A549 (cell line): ENCODE measurements at regions of chr9 and their contacts with region 1.

Region 1: GRCh38 chr9:131739980-131740648 is at the start of gene RAPGEF1:
- DNase-seq: peak in 1 of 2 experiments; percentile 40
- ATAC-seq: peak; percentile 62 to 67
- H3K4me3 ChIP-seq: peak within 1 kb of the TSS; percentile 67
- H3K27ac ChIP-seq: peak within 1 kb of the TSS; percentile 80 to 99
- H3K4me1 ChIP-seq: peaks cover 31% of the 10 kb centered on the region
- CTCF ChIP-seq: peak; percentile 100
- EP300 ChIP-seq: no peak
- POLR2A ChIP-seq: no peak
- RAD21 ChIP-seq: peak; percentile 67 to 87
- polyA plus RNA-seq, gene RAPGEF1: 27.7 and 32.5 TPM in 2 replicates

Region 2: GRCh38 chr9:131585375-131585774 is 154.7 kb before region 1 on chr9:
- CTCF ChIA-PET with region 1: interaction called, 737 read pairs
- POLR2A ChIA-PET with region 1: no interaction called
- DNase-seq: no peak
- ATAC-seq: no peak
- H3K4me3 ChIP-seq: no peak overlapping the region
- H3K27ac ChIP-seq: no peak overlapping the region
- H3K4me1 ChIP-seq: no peaks in the 10 kb centered on the region
- CTCF ChIP-seq: no peak
- EP300 ChIP-seq: no peak
- POLR2A ChIP-seq: no peak
- RAD21 ChIP-seq: no peak

Region 3: GRCh38 chr9:131635285-131635684 is 104.8 kb before region 1 on chr9:
- CTCF ChIA-PET with region 1: interaction called, 68 read pairs
- POLR2A ChIA-PET with region 1: no interaction called
- DNase-seq: peak; percentile 89 to 90
- ATAC-seq: peak; percentile 99
- H3K4me3 ChIP-seq: no peak overlapping the region
- H3K27ac ChIP-seq: peak overlapping the region; percentile 63 to 78
- H3K4me1 ChIP-seq: peaks cover 18% of the 10 kb centered on the region
- CTCF ChIP-seq: no peak
- EP300 ChIP-seq: no peak
- POLR2A ChIP-seq: no peak
- RAD21 ChIP-seq: peak in 1 of 2 experiments; percentile 22; a peak in 1 of 5 replicates

Region 4: DNA sequence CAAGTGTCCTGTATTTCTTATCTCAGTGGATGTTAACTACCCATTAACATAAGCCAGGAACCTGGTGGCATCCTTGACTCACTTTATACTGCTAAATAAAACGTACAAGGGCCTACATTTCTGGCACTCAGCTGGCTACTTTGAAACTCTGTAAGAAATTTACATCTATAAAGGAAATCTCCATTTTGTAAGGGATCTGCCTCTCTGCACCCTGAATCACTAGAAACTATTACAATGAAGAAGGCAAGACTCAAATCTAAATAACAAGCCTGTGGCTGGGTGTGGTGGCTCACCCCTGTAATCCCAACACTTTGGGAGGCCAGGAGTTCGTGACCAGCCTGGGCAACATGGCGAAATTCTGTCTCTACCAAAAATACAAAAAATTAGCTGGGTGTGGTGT is 51.7 kb before region 1 on chr9:
- CTCF ChIA-PET with region 1: no interaction called
- POLR2A ChIA-PET with region 1: no interaction called
- DNase-seq: no peak
- ATAC-seq: no peak
- H3K4me3 ChIP-seq: no peak overlapping the region
- H3K27ac ChIP-seq: no peak overlapping the region
- H3K4me1 ChIP-seq: no peaks in the 10 kb centered on the region
- CTCF ChIP-seq: no peak
- EP300 ChIP-seq: no peak
- POLR2A ChIP-seq: no peak
- RAD21 ChIP-seq: no peak

Region 5: GRCh38 chr9:131709771-131710454 is 30.2 kb before region 1 on chr9:
- CTCF ChIA-PET with region 1: interaction called, 53 read pairs
- POLR2A ChIA-PET with region 1: no interaction called
- DNase-seq: no peak
- ATAC-seq: no peak
- H3K4me3 ChIP-seq: no peak overlapping the region
- H3K27ac ChIP-seq: peak overlapping the region in 1 of 2 experiments; percentile 84; a peak in 4 of 6 replicates
- H3K4me1 ChIP-seq: peaks cover 74% of the 10 kb centered on the region
- CTCF ChIP-seq: no peak
- EP300 ChIP-seq: no peak
- POLR2A ChIP-seq: no peak
- RAD21 ChIP-seq: no peak

Region 6: DNA sequence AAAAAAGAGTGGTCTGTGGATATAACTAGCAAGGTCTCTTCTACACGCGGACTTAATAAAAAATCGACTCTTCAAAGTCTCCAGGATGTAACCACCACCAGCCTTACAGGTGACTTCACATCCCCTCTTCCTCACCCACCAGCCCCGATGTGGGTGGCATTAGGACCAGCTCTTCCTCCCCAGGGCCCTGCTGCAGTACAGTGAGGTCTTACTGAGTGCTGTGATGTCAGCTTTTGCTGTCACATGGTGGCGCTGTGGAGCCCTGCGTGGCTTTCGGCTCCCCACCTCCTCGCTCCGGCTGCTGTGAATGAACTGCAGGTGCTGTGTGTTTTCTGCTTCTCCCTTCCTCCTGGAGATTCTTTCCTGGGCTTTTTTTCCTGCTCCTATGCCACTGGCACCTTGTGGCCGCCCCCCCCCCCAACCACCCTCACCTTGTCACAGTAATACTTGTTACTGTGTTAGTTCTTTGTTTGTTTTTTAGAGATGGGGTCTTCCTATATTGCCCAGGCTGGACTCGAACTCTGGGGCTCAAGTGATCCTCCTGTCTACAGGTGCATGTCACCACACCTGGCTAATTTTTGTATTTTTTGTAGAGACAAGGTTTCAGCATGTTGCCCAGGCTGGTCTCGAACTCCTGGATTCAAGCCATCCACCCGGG is 15.6 kb after region 1 on chr9:
- CTCF ChIA-PET with region 1: interaction called, 23 read pairs
- POLR2A ChIA-PET with region 1: no interaction called
- DNase-seq: peak; percentile 71 to 81
- ATAC-seq: peak; percentile 97 to 98
- H3K4me3 ChIP-seq: no peak overlapping the region
- H3K27ac ChIP-seq: no peak overlapping the region
- H3K4me1 ChIP-seq: peaks cover 6% of the 10 kb centered on the region; the same call in 1 of the 3 replicates
- CTCF ChIP-seq: peak; percentile 84
- EP300 ChIP-seq: no peak
- POLR2A ChIP-seq: no peak
- RAD21 ChIP-seq: peak; percentile 61 to 67

Region 7: DNA sequence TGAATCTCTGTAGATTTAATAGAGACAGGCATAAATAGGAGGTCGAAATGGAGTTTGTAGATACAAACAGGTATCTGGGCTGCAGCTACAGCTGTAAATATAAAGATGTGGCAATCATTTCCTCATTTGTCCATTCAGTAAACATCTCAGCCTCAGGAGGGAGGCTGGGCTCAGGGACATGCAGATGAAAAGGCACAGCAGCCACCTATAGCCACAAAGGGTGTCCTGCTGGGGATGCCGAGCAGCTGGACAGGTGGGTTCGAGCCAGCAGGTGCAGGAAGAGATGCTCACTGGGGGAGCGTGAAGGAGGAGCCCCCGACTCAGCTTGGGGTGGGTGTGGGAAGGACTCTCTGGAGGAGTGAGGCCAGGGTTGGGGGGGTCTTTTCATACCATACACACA is 48.2 kb after region 1 on chr9:
- CTCF ChIA-PET with region 1: no interaction called
- POLR2A ChIA-PET with region 1: no interaction called
- DNase-seq: no peak
- ATAC-seq: peak; percentile 22 to 43; a peak in 3 of 6 replicates
- H3K4me3 ChIP-seq: no peak overlapping the region
- H3K27ac ChIP-seq: no peak overlapping the region
- H3K4me1 ChIP-seq: no peaks in the 10 kb centered on the region
- CTCF ChIP-seq: no peak
- EP300 ChIP-seq: no peak
- POLR2A ChIP-seq: no peak
- RAD21 ChIP-seq: no peak

Region 8: DNA sequence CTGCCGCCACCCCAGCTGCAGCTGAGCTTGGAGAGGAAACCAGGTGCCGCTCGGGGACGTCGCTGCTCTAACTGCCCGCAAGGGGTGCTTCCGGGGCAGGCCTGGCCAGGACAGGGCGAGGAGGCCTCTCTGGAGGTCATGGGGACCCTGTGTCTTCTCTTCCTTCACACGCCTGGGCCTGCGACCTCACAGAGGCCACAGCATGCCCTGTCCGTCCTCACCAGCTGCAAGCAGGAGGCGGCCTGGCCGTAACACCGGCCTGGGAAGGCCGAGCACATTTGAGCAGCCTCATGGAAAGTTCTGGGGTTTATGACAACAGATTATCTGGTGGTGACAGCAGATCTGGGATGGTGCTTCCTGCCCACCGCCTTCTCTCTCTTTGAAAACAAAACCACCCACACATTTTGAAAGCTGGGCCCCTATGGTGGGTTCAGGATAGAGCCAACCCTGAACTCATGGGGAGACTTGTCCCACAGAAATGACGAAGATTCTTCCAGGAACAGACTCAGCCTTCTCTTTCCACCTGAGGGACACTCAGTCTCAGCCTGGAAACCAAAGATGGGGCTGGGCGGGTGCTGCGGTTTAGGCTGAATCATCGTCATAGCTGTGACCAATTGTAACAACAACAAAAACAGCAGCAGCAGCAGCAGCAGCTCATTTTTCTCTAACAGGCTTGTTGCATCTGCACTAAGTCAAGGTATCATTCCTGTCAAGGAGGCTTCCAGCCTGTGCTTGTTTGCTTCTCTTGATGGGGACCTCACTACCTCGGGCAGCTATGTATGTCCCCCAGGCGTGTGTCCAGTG is 99.4 kb after region 1 on chr9:
- CTCF ChIA-PET with region 1: no interaction called
- POLR2A ChIA-PET with region 1: no interaction called
- DNase-seq: no peak
- ATAC-seq: no peak
- H3K4me3 ChIP-seq: no peak overlapping the region
- H3K27ac ChIP-seq: no peak overlapping the region
- H3K4me1 ChIP-seq: no peaks in the 10 kb centered on the region
- CTCF ChIP-seq: no peak
- EP300 ChIP-seq: no peak
- POLR2A ChIP-seq: no peak
- RAD21 ChIP-seq: no peak

Region 9: DNA sequence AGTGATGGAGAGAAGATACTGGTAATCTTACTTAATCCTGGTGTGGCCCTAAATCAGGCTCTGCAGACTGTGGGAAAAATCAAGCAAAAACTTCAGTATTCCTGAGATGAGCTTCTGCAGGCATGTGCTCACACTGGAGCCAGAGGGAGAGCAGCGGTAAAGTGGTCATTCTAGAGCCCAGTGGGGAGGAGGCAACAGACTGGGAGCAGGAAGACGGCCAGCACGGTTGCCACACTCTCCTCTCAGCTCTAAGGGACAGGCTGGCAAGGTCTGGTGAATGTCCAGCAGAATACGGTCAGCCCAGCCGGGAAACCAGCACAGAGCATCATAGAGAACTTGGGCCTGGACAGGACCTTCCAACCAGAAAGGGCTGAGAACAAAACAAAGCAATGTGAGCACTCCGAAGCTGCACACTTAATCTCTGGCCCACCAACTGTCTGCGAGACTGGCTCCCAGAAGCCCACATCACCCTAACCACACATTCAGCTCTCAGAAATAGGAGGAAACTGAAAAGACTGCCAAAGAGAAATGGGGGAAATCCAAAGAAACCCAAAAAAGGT is 309.3 kb after region 1 on chr9:
- CTCF ChIA-PET with region 1: no interaction called
- POLR2A ChIA-PET with region 1: no interaction called
- DNase-seq: no peak
- ATAC-seq: no peak
- H3K4me3 ChIP-seq: no peak overlapping the region
- H3K27ac ChIP-seq: no peak overlapping the region
- H3K4me1 ChIP-seq: peaks cover 4% of the 10 kb centered on the region; the same call in 1 of the 3 replicates
- CTCF ChIP-seq: no peak
- EP300 ChIP-seq: no peak
- POLR2A ChIP-seq: no peak
- RAD21 ChIP-seq: no peak